H1 (cell line): ENCODE measurements at regions of chr12 and their contacts with region 1.

Region 1: GRCh38 chr12:31387466-31387865 is 61.5 kb upstream of the SINHCAF start:
- DNase-seq: peak in 1 of 2 experiments; percentile 53
- H3K4me3 ChIP-seq: peak overlapping the region in 1 of 4 experiments; percentile 59; a peak in 1 of 8 replicates
- H3K27ac ChIP-seq: peak overlapping the region; percentile 94
- H3K4me1 ChIP-seq: peaks cover 8 to 25% (median 21%) of the 10 kb centered on the region in 4 experiments; a peak in 6 of 7 replicates
- H3K27me3 ChIP-seq: no peaks in the 10 kb centered on the region
- CTCF ChIP-seq: no peak
- EP300 ChIP-seq: no peak
- POLR2A ChIP-seq: no peak
- RAD21 ChIP-seq: no peak

Region 2: DNA sequence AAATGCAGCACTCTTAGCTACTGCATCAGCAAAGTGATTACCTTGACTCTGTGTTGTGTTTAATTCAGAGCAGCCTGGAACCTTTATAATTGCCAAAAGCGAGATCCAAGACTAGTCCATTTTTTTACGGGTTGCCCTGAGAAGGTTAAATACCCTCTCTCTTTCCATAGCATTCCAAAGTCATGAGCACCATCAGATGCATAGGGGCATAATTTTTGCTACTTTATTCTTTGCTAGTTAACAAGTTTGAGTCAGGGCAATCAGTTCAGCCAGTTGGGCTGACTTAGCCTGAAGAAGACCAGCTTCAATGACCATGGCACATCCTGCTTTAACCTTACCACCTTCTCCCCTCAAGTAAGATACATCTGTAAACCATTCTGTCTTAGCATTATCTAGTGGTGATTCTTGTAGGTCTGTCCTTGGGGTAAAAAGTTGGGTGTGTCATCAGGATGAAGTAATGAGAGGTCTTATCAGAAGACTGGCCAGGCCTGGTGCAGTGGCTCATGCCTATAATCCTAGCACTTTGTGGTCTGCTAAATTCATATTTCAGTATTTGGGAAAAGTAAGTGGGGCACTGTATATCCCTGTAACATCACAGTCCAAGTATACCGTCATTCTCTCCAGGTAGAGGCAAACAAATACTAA is 80.7 kb before region 1 on chr12:
- CTCF ChIA-PET with region 1: no interaction called
- POLR2A ChIA-PET with region 1: interaction called, 23 read pairs
- DNase-seq: no peak
- H3K4me3 ChIP-seq: no peak overlapping the region
- H3K27ac ChIP-seq: no peak overlapping the region
- H3K4me1 ChIP-seq: peaks cover 2 to 17% (median 8%) of the 10 kb centered on the region in 4 experiments; a peak in 5 of 7 replicates
- H3K27me3 ChIP-seq: no peaks in the 10 kb centered on the region
- CTCF ChIP-seq: no peak
- EP300 ChIP-seq: no peak
- POLR2A ChIP-seq: no peak
- RAD21 ChIP-seq: no peak

Region 3: DNA sequence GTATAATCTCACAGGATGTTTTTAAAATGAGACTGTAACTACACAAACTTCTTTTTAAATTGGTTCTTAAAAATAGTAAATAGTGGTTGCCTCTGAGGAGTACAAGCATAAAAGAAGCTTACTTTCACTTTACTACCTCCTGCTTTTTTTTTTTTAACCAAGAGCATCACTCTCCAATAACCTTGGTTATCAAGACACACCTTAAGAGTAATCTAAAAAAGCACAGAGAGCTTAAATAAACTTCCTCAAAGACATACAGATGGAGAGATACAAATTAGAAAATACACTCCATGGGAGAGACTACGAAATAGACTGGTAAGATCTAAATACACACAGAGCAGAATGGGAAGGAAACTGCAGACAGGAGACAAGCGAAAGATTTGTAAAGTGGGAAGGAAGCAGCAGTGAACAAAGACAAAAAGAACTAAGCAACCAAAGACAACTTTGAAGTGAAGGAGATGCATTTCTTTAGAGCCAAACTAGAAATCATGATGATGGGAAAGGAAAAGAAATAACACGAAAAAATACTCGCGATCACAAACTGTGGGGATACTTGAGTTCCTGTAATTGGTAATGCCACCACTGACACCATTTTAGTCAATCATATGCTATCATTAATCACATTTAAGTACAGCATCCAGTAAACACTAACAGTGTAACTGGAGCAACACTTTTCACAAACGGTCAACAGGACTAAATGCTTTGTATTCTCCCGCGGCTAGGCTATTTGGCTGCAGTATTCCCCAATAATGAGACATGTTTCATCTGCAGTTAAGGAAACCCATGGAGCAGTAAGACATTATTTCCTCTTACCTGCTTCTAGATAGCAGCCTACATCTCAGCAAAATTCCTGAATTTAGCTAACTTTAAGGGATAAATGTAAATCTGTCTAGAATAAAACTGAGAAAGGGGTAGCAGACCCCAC is 69.7 kb before region 1 on chr12:
- CTCF ChIA-PET with region 1: no interaction called
- POLR2A ChIA-PET with region 1: interaction called, 85 read pairs
- DNase-seq: no peak
- H3K4me3 ChIP-seq: peak overlapping the region in 3 of 4 experiments; percentile 2 to 99 (median 16); a peak in 2 of 8 replicates
- H3K27ac ChIP-seq: no peak overlapping the region
- H3K4me1 ChIP-seq: peaks cover 9 to 31% (median 22%) of the 10 kb centered on the region in 4 experiments
- H3K27me3 ChIP-seq: no peaks in the 10 kb centered on the region
- CTCF ChIP-seq: no peak
- EP300 ChIP-seq: no peak
- POLR2A ChIP-seq: peak in 1 of 2 experiments; percentile 57; a peak in 1 of 3 replicates
- RAD21 ChIP-seq: no peak

Region 4: DNA sequence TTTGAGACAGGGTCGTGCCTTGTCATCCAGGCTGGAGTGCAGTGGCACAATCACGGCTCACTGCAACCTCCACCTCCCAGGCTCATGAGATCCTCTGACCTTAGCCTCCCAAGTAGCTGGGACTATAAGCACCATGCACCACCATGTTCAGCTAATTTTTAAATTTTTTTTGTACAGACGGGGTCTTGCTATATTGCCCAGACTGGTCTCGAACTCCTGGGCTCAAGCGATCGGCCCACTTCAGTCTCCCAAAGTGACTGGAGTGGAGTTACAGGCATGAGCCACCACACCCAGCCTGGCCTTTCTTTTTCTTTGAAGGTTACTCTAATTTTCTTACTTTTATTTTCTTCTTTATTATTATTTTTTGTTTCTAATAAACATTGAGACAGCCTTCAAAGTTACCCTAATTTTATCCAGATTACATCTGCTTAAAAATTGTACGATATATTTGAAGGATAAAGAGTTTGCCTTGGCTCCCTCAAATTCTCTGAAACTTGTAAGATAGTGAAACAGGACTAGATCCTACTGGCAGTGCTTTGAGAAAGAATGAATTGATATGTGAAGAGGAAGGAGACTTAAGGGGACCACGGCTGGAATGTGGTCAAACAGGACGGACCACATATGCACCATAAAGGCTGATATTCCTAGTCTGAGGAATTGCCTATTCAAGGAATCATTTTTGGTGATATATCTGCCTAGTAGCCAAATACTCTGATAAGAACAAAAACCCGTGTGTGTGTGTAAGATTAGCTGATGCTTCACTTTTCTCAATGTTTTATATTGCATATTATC is 47.4 kb before region 1 on chr12:
- CTCF ChIA-PET with region 1: no interaction called
- POLR2A ChIA-PET with region 1: interaction called, 41 read pairs
- DNase-seq: no peak
- H3K4me3 ChIP-seq: no peak overlapping the region; a peak in 1 of 8 replicates
- H3K27ac ChIP-seq: no peak overlapping the region
- H3K4me1 ChIP-seq: peaks cover 0 to 10% (median 5%) of the 10 kb centered on the region in 4 experiments; a peak in 4 of 7 replicates
- H3K27me3 ChIP-seq: no peaks in the 10 kb centered on the region
- CTCF ChIP-seq: no peak
- EP300 ChIP-seq: peak in 1 of 2 experiments; percentile 76; a peak in 1 of 3 replicates
- POLR2A ChIP-seq: no peak
- RAD21 ChIP-seq: no peak

Region 5: DNA sequence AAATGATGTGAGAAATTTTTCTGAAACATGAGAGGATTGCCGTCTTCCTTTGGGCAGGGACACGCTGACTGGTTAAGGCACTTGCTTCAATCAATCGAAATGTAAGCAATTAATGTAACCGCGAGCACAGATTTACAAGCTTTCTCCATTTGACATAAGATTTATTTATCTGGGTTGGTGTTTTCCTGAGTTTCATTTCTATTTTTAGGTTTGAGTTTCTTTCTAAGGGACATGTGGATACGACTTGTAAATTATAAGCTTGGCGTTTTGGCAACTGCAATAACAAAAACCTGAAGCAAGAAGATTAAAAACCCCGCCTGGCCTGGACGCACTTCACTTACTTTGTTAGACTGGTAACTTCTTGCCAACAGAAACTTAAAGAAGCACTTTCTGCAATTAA is 41.2 kb before region 1 on chr12:
- CTCF ChIA-PET with region 1: no interaction called
- POLR2A ChIA-PET with region 1: interaction called, 41 read pairs
- DNase-seq: no peak
- H3K4me3 ChIP-seq: no peak overlapping the region
- H3K27ac ChIP-seq: no peak overlapping the region
- H3K4me1 ChIP-seq: peaks cover 0 to 9% (median 2%) of the 10 kb centered on the region in 4 experiments; a peak in 4 of 7 replicates
- H3K27me3 ChIP-seq: no peaks in the 10 kb centered on the region
- CTCF ChIP-seq: no peak
- EP300 ChIP-seq: no peak
- POLR2A ChIP-seq: no peak
- RAD21 ChIP-seq: no peak

Region 6: GRCh38 chr12:31353750-31354708 is 33.4 kb before region 1 on chr12:
- CTCF ChIA-PET with region 1: interaction called, 3 read pairs
- POLR2A ChIA-PET with region 1: interaction called, 11 read pairs
- DNase-seq: no peak
- H3K4me3 ChIP-seq: no peak overlapping the region; a peak in 1 of 8 replicates
- H3K27ac ChIP-seq: no peak overlapping the region; the same call in 1 of the 2 replicates
- H3K4me1 ChIP-seq: peaks cover 0 to 8% (median 5%) of the 10 kb centered on the region in 4 experiments; a peak in 3 of 7 replicates
- H3K27me3 ChIP-seq: no peaks in the 10 kb centered on the region
- CTCF ChIP-seq: no peak
- EP300 ChIP-seq: no peak
- POLR2A ChIP-seq: no peak
- RAD21 ChIP-seq: 0 out of 4 replicates have a peak, but pooled peaks of 1 of the 2 experiments have one; percentile 1

Region 7: DNA sequence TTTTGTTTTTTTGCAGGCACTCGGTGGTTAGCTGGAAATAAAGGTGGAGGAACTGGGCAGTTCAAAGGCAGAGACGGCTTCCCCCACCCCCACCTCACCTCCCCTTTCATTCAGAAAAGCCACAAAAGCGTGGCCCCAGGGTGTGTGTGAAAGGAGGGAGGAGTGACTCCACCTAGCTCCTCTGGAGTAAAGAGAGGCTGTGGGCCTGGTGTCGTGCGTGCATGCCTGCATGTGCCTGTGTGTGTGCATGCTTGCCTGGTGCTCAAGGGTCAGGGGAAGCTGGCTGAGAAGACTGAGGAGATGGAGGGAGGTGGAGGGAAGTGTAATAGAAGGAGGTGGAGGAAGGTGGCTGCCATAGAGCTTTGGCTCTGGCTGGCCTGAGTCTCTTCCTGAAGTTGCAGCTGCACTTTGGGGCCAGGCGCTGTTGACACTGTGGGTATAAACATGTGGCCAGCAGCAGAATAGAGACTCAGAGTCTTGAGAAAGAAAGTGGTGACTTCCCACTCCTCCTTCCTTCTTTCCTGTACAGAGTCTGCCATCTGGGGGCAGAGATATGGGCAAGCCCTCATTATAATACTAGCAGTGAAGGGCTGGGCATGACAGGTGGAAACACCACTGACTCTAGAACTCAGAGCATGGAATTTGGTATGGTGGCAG is 24.6 kb before region 1 on chr12:
- CTCF ChIA-PET with region 1: interaction called, 4 read pairs
- POLR2A ChIA-PET with region 1: interaction called, 474 read pairs
- DNase-seq: peak in 1 of 2 experiments; percentile 58
- H3K4me3 ChIP-seq: peak overlapping the region in 1 of 4 experiments; percentile 33; a peak in 2 of 8 replicates
- H3K27ac ChIP-seq: peak overlapping the region; percentile 85
- H3K4me1 ChIP-seq: peaks cover 13 to 21% (median 21%) of the 10 kb centered on the region in 4 experiments
- H3K27me3 ChIP-seq: no peaks in the 10 kb centered on the region
- CTCF ChIP-seq: no peak
- EP300 ChIP-seq: no peak
- POLR2A ChIP-seq: no peak
- RAD21 ChIP-seq: peak in 1 of 2 experiments; percentile 25; a peak in 1 of 4 replicates

Region 8: GRCh38 chr12:31662176-31662849 is 274.8 kb after region 1 on chr12:
- CTCF ChIA-PET with region 1: no interaction called
- POLR2A ChIA-PET with region 1: no interaction called
- DNase-seq: no peak
- H3K4me3 ChIP-seq: no peak overlapping the region
- H3K27ac ChIP-seq: no peak overlapping the region
- H3K4me1 ChIP-seq: peaks cover 0 to 6% (median 3%) of the 10 kb centered on the region in 4 experiments; a peak in 3 of 7 replicates
- H3K27me3 ChIP-seq: no peaks in the 10 kb centered on the region; a peak in 1 of 7 replicates
- CTCF ChIP-seq: no peak
- EP300 ChIP-seq: no peak
- POLR2A ChIP-seq: no peak
- RAD21 ChIP-seq: no peak